Right cardiac atrium (tissue), 5 donors: ENCODE measurements at regions of chr4 and their contacts with region 1.

Region 1: DNA sequence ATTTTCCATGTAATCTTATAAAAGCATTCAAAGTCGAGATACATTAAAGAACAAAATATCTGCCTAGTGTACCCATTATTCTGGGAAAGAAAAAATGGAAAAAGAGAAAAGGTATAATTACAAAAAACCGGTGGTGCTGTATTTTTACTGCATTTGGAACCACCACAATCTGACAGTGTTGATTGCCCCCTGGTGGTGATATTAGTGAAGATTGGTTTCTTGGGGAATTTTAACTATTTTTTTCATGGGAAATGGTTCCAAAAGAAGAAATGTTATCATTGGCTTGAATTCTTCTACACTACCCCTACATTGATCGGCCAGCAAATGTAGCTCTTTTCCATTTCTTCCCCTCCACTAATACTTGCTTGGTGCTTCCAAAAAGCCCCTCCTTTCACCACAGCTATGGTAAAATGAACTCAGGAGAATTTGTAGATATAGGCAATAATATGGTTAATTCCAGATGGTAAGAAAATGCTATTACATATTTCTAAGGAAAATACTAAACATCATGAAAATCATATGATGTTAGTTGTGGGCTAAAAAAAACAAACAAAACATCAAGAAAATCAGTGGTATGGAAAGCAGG is 50.0 kb downstream of the COX18 start:
- DNase-seq: no peak
- ATAC-seq: no peak
- H3K4me3 ChIP-seq: no peak overlapping the region
- H3K27ac ChIP-seq: no peak overlapping the region
- H3K4me1 ChIP-seq: no peaks in the 10 kb centered on the region
- H3K27me3 ChIP-seq: peaks cover 2% of the 10 kb centered on the region

Region 2: DNA sequence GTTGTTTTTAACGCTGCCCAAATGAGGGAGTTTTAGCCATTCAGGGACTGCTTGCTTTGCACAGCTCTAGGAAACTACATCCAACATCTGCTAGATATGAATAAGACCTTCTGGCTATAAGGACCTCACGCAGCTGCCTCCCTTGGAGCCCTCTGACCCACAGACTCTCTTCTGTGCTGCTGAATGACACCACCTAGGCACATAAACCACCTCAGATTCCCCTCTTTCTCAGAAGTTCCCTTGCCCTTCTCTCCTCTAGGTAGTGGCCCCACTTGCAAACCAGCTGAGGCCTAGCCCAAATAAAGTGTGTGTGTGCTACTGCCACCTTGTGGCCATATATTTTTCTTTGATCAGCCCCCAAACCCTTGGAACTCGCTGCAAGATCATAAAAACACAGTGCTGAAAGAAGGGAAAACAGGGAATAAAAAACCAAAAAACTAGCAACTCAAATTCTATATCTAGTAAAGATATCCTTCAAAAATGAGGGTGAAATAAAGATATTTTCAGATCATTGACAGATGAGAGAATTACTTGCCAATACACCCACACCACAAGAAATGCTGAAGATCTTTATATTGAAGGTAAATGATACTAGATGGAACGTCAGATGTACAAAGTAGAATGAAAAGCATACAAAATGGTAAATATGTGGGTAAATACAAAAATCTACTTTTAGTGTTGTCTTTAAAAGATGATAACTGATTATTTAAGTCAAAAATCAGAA is 716.4 kb before region 1 on chr4:
- intact Hi-C with region 1: loop called in 1 of 4 experiments (anchors 10 kb)
- DNase-seq: no peak
- ATAC-seq: peak; percentile 57 to 68
- H3K4me3 ChIP-seq: no peak overlapping the region
- H3K27ac ChIP-seq: no peak overlapping the region
- H3K4me1 ChIP-seq: no peaks in the 10 kb centered on the region
- H3K27me3 ChIP-seq: no peaks in the 10 kb centered on the region

Region 3: GRCh38 chr4:72505314-72505744 is 514.2 kb before region 1 on chr4:
- intact Hi-C with region 1: loop called (anchors 5 to 10 kb)
- DNase-seq: peak; percentile 16 to 42 (median 25)
- ATAC-seq: peak; percentile 59 to 77
- H3K4me3 ChIP-seq: no peak overlapping the region
- H3K27ac ChIP-seq: no peak overlapping the region
- H3K4me1 ChIP-seq: no peaks in the 10 kb centered on the region
- H3K27me3 ChIP-seq: no peaks in the 10 kb centered on the region

Region 4: DNA sequence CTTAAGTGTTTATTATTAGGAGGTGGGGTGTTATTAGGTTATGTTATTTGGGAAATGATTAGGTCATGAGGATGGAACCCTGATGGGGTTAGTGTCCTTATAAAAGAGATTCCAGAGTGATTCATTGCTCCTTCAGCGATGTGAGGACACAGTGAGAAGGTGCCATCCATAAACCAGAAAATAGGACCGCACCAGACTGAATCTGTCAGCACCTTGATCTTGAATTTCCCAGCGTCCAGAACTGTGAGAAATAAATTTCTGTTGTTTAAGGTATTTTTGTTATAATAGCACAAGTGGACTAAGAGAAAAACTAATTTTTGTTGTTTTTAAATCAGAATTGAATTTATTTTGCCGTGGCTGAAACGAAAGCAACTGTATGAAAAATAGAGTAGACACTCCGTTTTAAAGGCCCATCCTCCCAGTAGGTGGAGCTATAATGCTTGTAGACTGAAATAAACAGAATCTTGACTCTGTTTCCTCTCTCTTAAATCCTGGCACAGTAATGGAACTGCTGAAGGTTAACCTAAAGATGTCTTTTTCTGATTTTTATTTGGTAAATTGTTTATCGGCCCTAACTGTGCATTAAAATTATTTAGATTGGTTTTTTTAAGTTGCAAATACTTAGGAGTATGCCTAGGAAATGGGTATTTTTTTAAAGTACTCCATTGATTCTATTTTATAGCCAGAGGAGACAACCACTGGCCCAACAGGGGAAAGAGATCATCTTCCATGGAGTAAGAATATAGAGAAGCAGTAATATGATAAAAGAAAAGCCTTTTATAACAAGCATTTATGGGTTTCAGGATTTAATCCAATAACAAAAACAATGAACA is 317.4 kb before region 1 on chr4:
- intact Hi-C with region 1: loop called in 2 of 4 experiments (anchors 10 kb)
- DNase-seq: no peak
- ATAC-seq: peak; percentile 43 to 59
- H3K4me3 ChIP-seq: peak overlapping the region; percentile 48
- H3K27ac ChIP-seq: no peak overlapping the region
- H3K4me1 ChIP-seq: no peaks in the 10 kb centered on the region
- H3K27me3 ChIP-seq: no peaks in the 10 kb centered on the region